Activated B cell treated with CpG ODN at 0.5 μM for 24 hours (primary cell): ENCODE measurements at regions of chr13 and their contacts with region 1.

Region 1: DNA sequence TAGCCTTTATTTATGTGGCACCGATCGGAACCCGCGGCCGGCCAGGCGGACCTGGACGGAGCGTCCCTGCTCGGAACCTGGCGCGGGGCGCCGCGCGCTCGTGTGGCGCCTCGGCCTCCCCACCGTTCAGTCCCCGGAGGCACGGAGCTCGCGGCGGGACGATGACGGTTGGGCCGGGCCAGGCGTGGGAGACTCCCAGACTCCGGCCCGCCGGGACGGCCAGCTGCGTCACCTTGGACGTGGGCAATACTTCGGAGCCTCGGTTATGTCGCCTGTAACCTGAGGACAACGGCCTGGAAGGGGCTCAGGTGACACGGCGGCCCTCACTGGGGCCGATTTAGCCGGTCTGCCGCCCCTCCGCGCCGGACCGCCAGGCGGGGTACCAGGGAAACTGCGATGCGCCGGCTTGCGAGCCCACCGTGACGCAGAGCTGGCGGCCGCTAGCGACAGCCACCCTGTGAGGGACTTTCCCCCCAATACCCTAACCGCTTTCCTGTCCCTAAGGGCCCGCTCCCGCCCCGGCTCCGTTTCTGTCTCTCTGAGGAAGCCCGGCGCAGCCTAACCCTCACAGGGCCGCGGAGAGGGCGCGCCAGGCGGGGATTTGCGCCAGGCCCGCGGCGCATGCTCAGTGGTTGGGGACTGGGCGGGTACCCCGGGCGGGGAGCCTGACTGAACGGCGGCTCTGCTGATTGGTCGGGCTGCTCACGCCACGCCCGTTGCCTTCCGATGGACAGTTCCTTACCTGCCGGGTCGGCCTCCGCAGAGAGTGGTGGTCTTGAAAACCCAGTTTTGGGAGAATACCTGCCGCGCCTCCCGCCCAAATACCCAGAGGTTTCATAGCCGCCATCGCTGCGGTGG is 109.5 kb upstream of the DOCK9 start:
- DNase-seq: peak; percentile 92
- ATAC-seq: peak; percentile 81
- H3K4me3 Mint-ChIP-seq: peak overlapping the region; percentile 98
- H3K27ac Mint-ChIP-seq: peak overlapping the region; percentile 96
- H3K4me1 Mint-ChIP-seq: peaks cover 32% of the 10 kb centered on the region
- H3K27me3 Mint-ChIP-seq: peaks cover 2% of the 10 kb centered on the region
- CTCF ChIP-seq: no peak

Region 2: GRCh38 chr13:97221989-97222700 is 1865.2 kb before region 1 on chr13 and contains the start of gene MBNL2:
- CTCF ChIA-PET with region 1: no interaction called
- POLR2A ChIA-PET with region 1: no interaction called
- intact Hi-C with region 1: loop called (anchors 10 kb)
- DNase-seq: peak; percentile 67
- ATAC-seq: peak; percentile 98
- H3K4me3 Mint-ChIP-seq: peak within 1 kb of the TSS; percentile 89
- H3K27ac Mint-ChIP-seq: peak within 1 kb of the TSS; percentile 92
- H3K4me1 Mint-ChIP-seq: peaks cover 51% of the 10 kb centered on the region
- H3K27me3 Mint-ChIP-seq: no peaks in the 10 kb centered on the region
- CTCF ChIP-seq: no peak
- total RNA-seq, gene MBNL2: 15.3 and 18.8 TPM in 2 replicates

Region 3: DNA sequence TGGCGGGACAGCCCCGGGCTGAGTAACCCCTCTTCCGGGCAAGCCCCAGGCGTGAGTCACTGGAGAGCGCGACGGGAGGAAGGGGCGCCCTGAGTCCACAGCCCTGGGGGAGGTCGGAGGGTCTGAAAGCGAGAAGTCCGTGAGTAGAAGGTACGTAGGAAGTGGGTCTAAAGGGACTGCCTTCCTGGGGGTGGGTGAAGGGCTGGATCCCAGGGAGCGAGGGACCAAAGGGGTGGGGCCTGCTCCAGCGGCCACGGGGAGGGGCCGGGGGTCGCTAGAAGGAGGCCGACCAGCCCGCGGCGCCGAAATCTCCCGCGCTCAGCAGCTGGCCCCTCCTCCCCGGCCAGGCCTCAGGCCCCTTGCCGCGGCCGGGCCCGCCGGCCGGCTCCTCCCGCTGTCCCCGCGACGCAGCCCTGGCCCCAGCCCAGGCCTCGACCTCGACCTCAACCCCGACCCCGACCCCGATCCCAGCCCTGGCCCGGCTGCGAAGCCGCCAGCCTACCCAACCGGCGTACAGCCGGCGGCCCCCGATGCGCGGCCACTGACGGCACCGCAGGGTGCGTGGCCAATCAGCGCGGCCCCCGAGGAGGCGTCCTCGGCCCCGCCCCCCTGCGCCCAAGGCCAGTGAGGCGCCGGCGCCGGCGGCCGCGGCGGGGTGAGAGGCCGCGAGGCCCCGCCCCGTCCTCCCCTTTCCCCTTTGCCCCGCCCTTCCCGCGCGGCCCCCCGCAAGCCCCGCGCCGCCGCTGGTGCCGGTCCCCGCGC is 1111.3 kb before region 1 on chr13:
- CTCF ChIA-PET with region 1: no interaction called
- POLR2A ChIA-PET with region 1: no interaction called
- intact Hi-C with region 1: loop called (anchors 2 kb)
- DNase-seq: peak; percentile 95
- ATAC-seq: peak; percentile 91
- H3K4me3 Mint-ChIP-seq: peak overlapping the region; percentile 92
- H3K27ac Mint-ChIP-seq: peak overlapping the region; percentile 94
- H3K4me1 Mint-ChIP-seq: peaks cover 39% of the 10 kb centered on the region
- H3K27me3 Mint-ChIP-seq: no peaks in the 10 kb centered on the region
- CTCF ChIP-seq: no peak

Region 4: GRCh38 chr13:99124794-99125316 is 37.5 kb after region 1 on chr13:
- CTCF ChIA-PET with region 1: no interaction called
- POLR2A ChIA-PET with region 1: interaction called, 4 read pairs
- intact Hi-C with region 1: loop called (anchors 5 kb)
- DNase-seq: no peak
- ATAC-seq: peak; percentile 84
- H3K4me3 Mint-ChIP-seq: peak overlapping the region; percentile 35
- H3K27ac Mint-ChIP-seq: peak overlapping the region; percentile 61
- H3K4me1 Mint-ChIP-seq: peaks cover 14% of the 10 kb centered on the region
- H3K27me3 Mint-ChIP-seq: peaks cover 11% of the 10 kb centered on the region
- CTCF ChIP-seq: no peak

Region 5: GRCh38 chr13:99258210-99258860 is 171.0 kb after region 1 on chr13 and contains the start of gene GPR18:
- CTCF ChIA-PET with region 1: interaction called, 3 read pairs
- POLR2A ChIA-PET with region 1: interaction called, 3 read pairs
- intact Hi-C with region 1: loop called (anchors 2 kb)
- DNase-seq: no peak
- ATAC-seq: peak; percentile 65
- H3K4me3 Mint-ChIP-seq: peak within 1 kb of the TSS; percentile 94
- H3K27ac Mint-ChIP-seq: peak within 1 kb of the TSS; percentile 96
- H3K4me1 Mint-ChIP-seq: peaks cover 86% of the 10 kb centered on the region
- H3K27me3 Mint-ChIP-seq: no peaks in the 10 kb centered on the region
- CTCF ChIP-seq: no peak
- total RNA-seq, gene GPR18: 29.0 and 32.4 TPM in 2 replicates

Region 6: GRCh38 chr13:99312493-99312883 is 225.2 kb after region 1 on chr13:
- CTCF ChIA-PET with region 1: no interaction called
- POLR2A ChIA-PET with region 1: no interaction called
- intact Hi-C with region 1: no loop called
- DNase-seq: no peak
- ATAC-seq: no peak
- H3K4me3 Mint-ChIP-seq: no peak overlapping the region
- H3K27ac Mint-ChIP-seq: peak overlapping the region; percentile 59
- H3K4me1 Mint-ChIP-seq: peaks cover 56% of the 10 kb centered on the region
- H3K27me3 Mint-ChIP-seq: no peaks in the 10 kb centered on the region
- CTCF ChIP-seq: no peak

Region 7: GRCh38 chr13:99606324-99607066 is 519.2 kb after region 1 on chr13:
- CTCF ChIA-PET with region 1: no interaction called
- POLR2A ChIA-PET with region 1: interaction called, 3 read pairs
- intact Hi-C with region 1: loop called (anchors 1 kb)
- DNase-seq: peak; percentile 86
- ATAC-seq: peak; percentile 91
- H3K4me3 Mint-ChIP-seq: peak within 1 kb of the TSS; percentile 91
- H3K27ac Mint-ChIP-seq: peak within 1 kb of the TSS; percentile 86
- H3K4me1 Mint-ChIP-seq: peaks cover 38% of the 10 kb centered on the region
- H3K27me3 Mint-ChIP-seq: no peaks in the 10 kb centered on the region
- CTCF ChIP-seq: no peak

Region 8: GRCh38 chr13:100674848-100675660 is 1587.7 kb after region 1 on chr13:
- CTCF ChIA-PET with region 1: no interaction called
- POLR2A ChIA-PET with region 1: no interaction called
- intact Hi-C with region 1: loop called (anchors 2 kb)
- DNase-seq: peak; percentile 100
- ATAC-seq: peak; percentile 93
- H3K4me3 Mint-ChIP-seq: peak overlapping the region; percentile 84
- H3K27ac Mint-ChIP-seq: peak overlapping the region; percentile 77
- H3K4me1 Mint-ChIP-seq: peaks cover 18% of the 10 kb centered on the region
- H3K27me3 Mint-ChIP-seq: no peaks in the 10 kb centered on the region
- CTCF ChIP-seq: no peak